MCF 10A (cell line): ENCODE measurements at regions of chr11 and their contacts with region 1.

Region 1: DNA sequence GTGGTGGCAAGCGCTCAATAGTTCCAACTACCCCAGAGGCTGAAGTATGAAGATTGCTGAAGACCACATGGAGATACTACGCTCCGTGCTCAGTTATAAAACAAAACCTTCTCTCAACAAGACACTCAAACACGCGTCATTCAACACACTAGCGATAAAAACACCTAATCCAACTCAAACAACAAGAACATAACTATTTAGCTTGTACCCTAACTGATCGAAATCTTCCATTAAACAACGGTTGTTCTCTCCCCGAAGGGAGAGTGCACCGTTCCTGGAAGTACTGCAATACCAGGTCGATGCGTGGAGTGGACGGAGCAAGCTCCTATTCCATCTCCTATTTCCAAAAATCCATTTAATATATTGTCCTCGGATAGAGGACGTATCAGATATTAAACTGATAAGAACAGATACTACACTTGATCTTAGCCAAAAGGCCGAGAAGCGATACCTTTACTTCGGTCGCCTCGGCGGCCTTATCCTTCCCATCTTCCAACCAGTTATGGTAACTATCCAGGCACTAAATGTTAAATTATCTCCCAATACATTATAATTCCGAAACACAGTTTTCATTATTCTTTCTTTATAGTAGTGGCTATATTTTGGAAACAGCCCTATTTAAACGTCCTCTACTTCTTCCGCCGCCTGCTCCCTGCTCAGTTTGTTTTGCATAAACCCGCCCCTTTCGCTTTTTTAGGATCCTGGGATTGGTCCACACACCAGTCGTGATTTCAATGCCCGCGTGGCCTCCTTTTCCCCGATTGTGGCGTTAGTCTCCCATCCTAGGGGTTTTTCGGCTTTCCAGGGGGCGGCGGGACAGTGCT is 2.2 kb upstream of the WDR74 start:
- DNase-seq: peak; percentile 99
- H3K4me3 Mint-ChIP-seq: no peak overlapping the region
- H3K27ac Mint-ChIP-seq: no peak overlapping the region
- H3K4me1 Mint-ChIP-seq: peaks cover 12% of the 10 kb centered on the region
- H3K27me3 Mint-ChIP-seq: no peaks in the 10 kb centered on the region
- CTCF ChIP-seq: no peak

Region 2: DNA sequence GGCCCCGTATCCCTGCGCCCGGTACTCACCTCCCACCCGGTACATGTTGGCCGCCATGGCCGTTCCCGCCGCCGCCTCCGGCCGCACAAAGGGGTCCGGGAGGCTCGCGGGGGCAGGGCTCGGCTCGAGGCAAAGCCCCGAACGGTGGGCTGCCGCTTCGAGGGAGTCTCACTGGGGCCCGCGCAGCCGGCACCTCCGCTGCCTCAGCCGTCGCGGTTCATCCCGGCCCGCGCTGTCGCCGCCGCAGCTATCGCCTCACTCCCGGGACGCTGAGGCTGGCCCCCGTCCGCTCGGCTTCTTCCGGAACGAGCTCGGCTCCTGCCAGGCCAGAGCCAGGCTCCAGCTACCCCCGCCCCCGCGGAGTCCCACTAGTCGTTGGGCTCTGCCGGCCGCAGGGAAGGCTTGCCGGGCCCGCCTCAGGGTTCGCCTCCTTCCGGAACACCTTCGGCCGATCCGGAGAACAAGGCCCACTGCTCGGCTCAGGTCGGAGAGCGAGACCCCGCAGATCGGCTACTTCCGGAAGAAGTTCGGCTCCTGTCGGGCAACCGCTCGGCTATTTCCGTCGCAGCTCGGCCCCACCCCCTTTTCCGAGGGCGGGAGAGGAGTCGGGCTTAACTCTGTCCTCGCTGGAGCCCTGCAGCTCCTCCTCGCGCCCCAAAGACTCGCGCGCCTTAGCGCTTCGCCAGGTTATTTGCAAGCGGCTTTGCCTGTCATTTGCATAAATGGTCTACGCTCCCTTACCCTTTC is 240.0 kb before region 1 on chr11 and contains the start of gene MTA2:
- CTCF ChIA-PET with region 1: no interaction called
- POLR2A ChIA-PET with region 1: interaction called, 11 read pairs
- intact Hi-C with region 1: no loop called
- DNase-seq: peak; percentile 98
- H3K4me3 Mint-ChIP-seq: peak within 1 kb of the TSS; percentile 86
- H3K27ac Mint-ChIP-seq: peak within 1 kb of the TSS; percentile 96
- H3K4me1 Mint-ChIP-seq: peaks cover 38% of the 10 kb centered on the region
- H3K27me3 Mint-ChIP-seq: no peaks in the 10 kb centered on the region
- CTCF ChIP-seq: no peak
- total RNA-seq, gene MTA2: 139 and 176 TPM in 2 replicates

Region 3: DNA sequence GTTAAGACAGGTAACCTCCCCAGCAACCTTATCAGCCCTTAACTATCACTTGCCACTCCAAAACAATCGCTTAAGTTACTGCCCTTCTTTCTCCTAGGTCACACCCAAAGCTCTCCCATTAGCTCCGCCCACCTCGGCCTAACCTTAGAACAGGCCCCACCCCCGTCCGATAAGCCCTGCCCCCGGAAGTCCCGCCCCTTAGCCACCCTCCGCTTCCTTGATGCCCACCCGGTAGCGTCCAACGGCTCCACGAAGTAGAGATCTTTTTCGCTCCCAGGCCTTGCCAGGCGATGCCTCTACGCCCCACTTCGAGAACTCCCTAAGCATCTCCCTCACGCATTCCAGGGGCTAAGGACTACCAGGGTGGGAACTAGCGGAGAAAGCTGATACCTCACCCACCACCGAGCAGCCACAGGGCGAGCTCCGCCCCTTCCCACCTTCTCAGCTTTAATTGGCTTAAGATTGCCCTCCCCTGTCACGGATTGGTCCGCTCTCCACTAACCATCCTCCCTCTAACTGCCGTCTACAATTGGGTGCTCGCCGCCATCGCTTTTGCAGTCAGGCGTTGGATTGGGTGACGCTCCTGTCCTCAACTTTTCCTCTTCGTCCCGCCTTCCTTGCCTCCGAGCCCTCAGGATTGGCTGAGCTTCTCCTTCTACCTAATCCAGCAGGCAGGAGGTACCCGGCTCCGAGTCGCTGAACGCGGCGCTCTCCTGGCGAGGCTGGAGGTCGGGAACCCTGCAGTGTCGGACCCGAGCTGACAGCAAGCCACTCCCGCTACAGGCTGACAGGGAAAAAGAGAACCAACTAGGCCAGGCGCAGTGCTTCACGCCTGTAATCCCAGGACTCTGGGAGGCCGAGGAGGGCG is 87.6 kb before region 1 on chr11 and contains the start of gene ZBTB3:
- CTCF ChIA-PET with region 1: no interaction called
- POLR2A ChIA-PET with region 1: interaction called, 30 read pairs
- intact Hi-C with region 1: no loop called
- DNase-seq: peak; percentile 100
- H3K4me3 Mint-ChIP-seq: peak within 1 kb of the TSS; percentile 98
- H3K27ac Mint-ChIP-seq: peak within 1 kb of the TSS; percentile 96
- H3K4me1 Mint-ChIP-seq: peaks cover 3% of the 10 kb centered on the region
- H3K27me3 Mint-ChIP-seq: no peaks in the 10 kb centered on the region
- CTCF ChIP-seq: no peak
- total RNA-seq, gene ZBTB3: 7.1 and 11.6 TPM in 2 replicates

Region 4: GRCh38 chr11:62794201-62794775 is 47.3 kb before region 1 on chr11:
- CTCF ChIA-PET with region 1: interaction called, 3 read pairs
- POLR2A ChIA-PET with region 1: interaction called, 147 read pairs
- intact Hi-C with region 1: no loop called
- DNase-seq: no peak
- H3K4me3 Mint-ChIP-seq: no peak overlapping the region
- H3K27ac Mint-ChIP-seq: no peak overlapping the region
- H3K4me1 Mint-ChIP-seq: peaks cover 9% of the 10 kb centered on the region
- H3K27me3 Mint-ChIP-seq: no peaks in the 10 kb centered on the region
- CTCF ChIP-seq: no peak

Region 5: GRCh38 chr11:62816557-62816956 is 25.0 kb before region 1 on chr11:
- CTCF ChIA-PET with region 1: interaction called, 6 read pairs
- POLR2A ChIA-PET with region 1: interaction called, 10 read pairs
- intact Hi-C with region 1: no loop called
- DNase-seq: no peak
- H3K4me3 Mint-ChIP-seq: no peak overlapping the region
- H3K27ac Mint-ChIP-seq: no peak overlapping the region
- H3K4me1 Mint-ChIP-seq: no peaks in the 10 kb centered on the region
- H3K27me3 Mint-ChIP-seq: no peaks in the 10 kb centered on the region
- CTCF ChIP-seq: no peak

Region 6: GRCh38 chr11:62880803-62881578 is 39.4 kb after region 1 on chr11 and contains the start of gene SLC3A2:
- CTCF ChIA-PET with region 1: interaction called, 5 read pairs
- POLR2A ChIA-PET with region 1: interaction called, 57 read pairs
- intact Hi-C with region 1: loop called (anchors 2 kb)
- DNase-seq: peak; percentile 91
- H3K4me3 Mint-ChIP-seq: peak within 1 kb of the TSS; percentile 100
- H3K27ac Mint-ChIP-seq: peak within 1 kb of the TSS; percentile 99
- H3K4me1 Mint-ChIP-seq: peaks cover 47% of the 10 kb centered on the region
- H3K27me3 Mint-ChIP-seq: no peaks in the 10 kb centered on the region
- CTCF ChIP-seq: peak; percentile 70
- total RNA-seq, gene SLC3A2: 838 and 896 TPM in 2 replicates

Region 7: DNA sequence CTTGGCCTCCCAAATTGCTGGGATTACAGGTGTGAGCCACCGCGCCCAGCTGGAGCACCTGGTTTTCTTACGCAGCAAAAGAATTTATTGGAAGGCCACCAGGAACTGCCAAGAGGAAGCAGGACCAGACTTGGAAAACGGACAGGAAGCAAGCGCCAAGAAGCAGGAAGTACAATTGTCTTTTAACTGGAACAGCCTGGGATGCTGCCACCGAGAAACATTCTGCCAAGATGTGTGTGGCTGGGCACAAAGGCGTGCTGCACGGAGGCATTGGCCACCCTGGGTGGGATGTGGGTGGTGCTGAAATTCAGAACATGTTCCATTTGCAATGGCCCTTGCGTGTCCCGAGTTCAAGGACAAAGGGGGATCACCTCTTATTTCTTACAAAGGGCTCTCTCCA is 54.5 kb after region 1 on chr11:
- CTCF ChIA-PET with region 1: no interaction called
- POLR2A ChIA-PET with region 1: no interaction called
- intact Hi-C with region 1: no loop called
- DNase-seq: no peak
- H3K4me3 Mint-ChIP-seq: no peak overlapping the region
- H3K27ac Mint-ChIP-seq: no peak overlapping the region
- H3K4me1 Mint-ChIP-seq: no peaks in the 10 kb centered on the region
- H3K27me3 Mint-ChIP-seq: peaks cover 40% of the 10 kb centered on the region
- CTCF ChIP-seq: no peak

Region 8: DNA sequence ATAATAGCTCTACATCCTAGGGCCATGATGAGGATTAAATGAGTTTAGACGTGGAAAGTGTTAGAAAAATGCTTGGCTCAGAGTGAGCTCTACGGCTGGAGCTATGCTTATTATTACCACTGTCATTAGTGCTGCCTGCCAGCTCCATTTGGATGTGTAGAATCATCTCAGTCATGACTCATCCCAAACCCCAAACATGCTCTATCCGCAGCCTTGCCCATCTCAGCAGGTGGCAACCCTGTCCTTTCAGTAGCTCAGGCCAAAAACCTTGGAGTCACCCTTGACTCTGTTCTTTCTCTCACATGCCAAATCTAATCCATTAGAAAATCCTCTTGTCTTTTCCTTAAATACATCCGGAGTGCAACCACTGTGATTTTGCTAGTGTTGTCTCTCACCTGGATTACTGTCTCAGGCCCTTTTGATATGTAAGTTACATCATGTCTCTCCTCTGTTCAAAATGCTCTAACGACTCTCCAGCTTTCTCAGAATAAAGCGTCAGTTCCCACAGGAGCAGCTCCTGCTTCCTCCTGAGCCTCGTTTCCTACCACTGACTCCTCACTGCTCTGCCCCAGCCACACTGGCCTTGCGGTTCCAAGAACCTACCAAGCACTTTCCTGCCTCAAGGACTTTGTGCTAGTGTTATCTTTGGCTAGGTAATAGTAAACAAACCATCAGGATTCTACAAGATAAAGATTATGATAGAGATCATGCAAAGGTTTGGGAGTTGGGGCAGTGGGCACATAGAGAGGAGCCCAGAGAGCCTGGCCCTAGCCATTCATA is 90.1 kb after region 1 on chr11:
- CTCF ChIA-PET with region 1: no interaction called
- POLR2A ChIA-PET with region 1: no interaction called
- intact Hi-C with region 1: no loop called
- DNase-seq: peak; percentile 79
- H3K4me3 Mint-ChIP-seq: no peak overlapping the region
- H3K27ac Mint-ChIP-seq: no peak overlapping the region
- H3K4me1 Mint-ChIP-seq: peaks cover 8% of the 10 kb centered on the region
- H3K27me3 Mint-ChIP-seq: peaks cover 18% of the 10 kb centered on the region
- CTCF ChIP-seq: no peak